Endothelial cell of umbilical vein (primary cell): ENCODE measurements at regions of chr1 and their contacts with region 1.

Region 1: GRCh38 chr1:159132271-159132881 is 39.0 kb upstream of the CADM3 start:
- DNase-seq: peak; percentile 68
- H3K4me3 ChIP-seq: no peak overlapping the region
- H3K27ac ChIP-seq: no peak overlapping the region
- H3K4me1 ChIP-seq: no peaks in the 10 kb centered on the region
- H3K27me3 ChIP-seq: peaks cover 15 to 16% of the 10 kb centered on the region in 2 experiments
- CTCF ChIP-seq: peak; percentile 76 to 89
- POLR2A ChIP-seq: no peak

Region 2: GRCh38 chr1:159152031-159152430 is 19.7 kb after region 1 on chr1:
- CTCF ChIA-PET with region 1: interaction called, 12 read pairs
- POLR2A ChIA-PET with region 1: no interaction called
- dilution Hi-C with region 1: no loop called
- intact Hi-C with region 1: no loop called
- DNase-seq: no peak
- H3K4me3 ChIP-seq: no peak overlapping the region
- H3K27ac ChIP-seq: no peak overlapping the region
- H3K4me1 ChIP-seq: no peaks in the 10 kb centered on the region
- H3K27me3 ChIP-seq: peaks cover 1 to 3% of the 10 kb centered on the region in 2 experiments
- CTCF ChIP-seq: no peak
- POLR2A ChIP-seq: no peak

Region 3: GRCh38 chr1:159188375-159188788 is 56.0 kb after region 1 on chr1:
- CTCF ChIA-PET with region 1: interaction called, 12 read pairs
- POLR2A ChIA-PET with region 1: no interaction called
- dilution Hi-C with region 1: no loop called
- intact Hi-C with region 1: no loop called
- DNase-seq: peak; percentile 80
- H3K4me3 ChIP-seq: peak overlapping the region in 1 of 3 experiments; percentile 5
- H3K27ac ChIP-seq: no peak overlapping the region
- H3K4me1 ChIP-seq: no peaks in the 10 kb centered on the region
- H3K27me3 ChIP-seq: peaks cover 31 to 39% of the 10 kb centered on the region in 2 experiments
- CTCF ChIP-seq: no peak
- POLR2A ChIP-seq: no peak

Region 4: DNA sequence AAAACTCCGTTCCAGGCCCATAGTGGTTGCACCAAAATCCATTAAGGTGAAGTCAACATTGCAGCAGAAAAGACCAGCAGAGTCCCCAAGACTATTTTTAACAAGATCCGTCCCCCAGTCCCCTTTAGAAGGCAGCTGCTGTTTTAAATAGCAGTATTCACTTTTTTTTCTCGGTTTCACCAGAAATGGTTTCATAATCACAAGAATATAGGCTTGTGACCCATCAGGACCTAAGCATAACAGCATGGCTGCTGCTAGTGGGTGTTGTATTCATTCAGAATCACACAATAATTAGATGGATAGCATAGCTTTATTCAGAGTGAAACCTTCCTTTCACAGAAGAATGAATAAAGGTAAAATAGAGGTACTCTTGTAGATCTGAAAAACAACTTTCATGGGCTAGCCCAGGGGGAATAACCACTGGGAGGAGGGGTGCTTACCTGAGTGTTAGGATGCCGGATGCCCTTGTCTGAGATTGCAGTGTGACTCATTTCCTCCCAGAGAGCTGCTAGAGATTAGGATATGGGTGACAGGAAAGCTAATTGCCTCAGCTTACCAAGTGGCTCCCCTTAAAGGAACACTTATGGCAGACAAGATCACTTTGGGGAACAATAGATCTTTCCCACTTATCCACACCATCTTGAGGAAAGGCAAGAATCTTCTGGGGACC is 107.3 kb after region 1 on chr1:
- CTCF ChIA-PET with region 1: no interaction called
- POLR2A ChIA-PET with region 1: no interaction called
- dilution Hi-C with region 1: no loop called
- intact Hi-C with region 1: no loop called
- DNase-seq: peak; percentile 18
- H3K4me3 ChIP-seq: no peak overlapping the region
- H3K27ac ChIP-seq: no peak overlapping the region
- H3K4me1 ChIP-seq: peaks cover 8% of the 10 kb centered on the region
- H3K27me3 ChIP-seq: no peaks in the 10 kb centered on the region
- CTCF ChIP-seq: no peak
- POLR2A ChIP-seq: no peak

Region 5: GRCh38 chr1:159790237-159790917 is 658.0 kb after region 1 on chr1:
- CTCF ChIA-PET with region 1: interaction called, 15 read pairs
- POLR2A ChIA-PET with region 1: no interaction called
- dilution Hi-C with region 1: no loop called
- intact Hi-C with region 1: loop called (anchors 2 kb)
- DNase-seq: peak; percentile 57
- H3K4me3 ChIP-seq: no peak overlapping the region
- H3K27ac ChIP-seq: no peak overlapping the region
- H3K4me1 ChIP-seq: peaks cover 16% of the 10 kb centered on the region
- H3K27me3 ChIP-seq: no peaks in the 10 kb centered on the region
- CTCF ChIP-seq: peak; percentile 61 to 65
- POLR2A ChIP-seq: no peak

Region 6: GRCh38 chr1:160078512-160079195 is 946.3 kb after region 1 on chr1:
- CTCF ChIA-PET with region 1: interaction called, 27 read pairs
- POLR2A ChIA-PET with region 1: no interaction called
- dilution Hi-C with region 1: no loop called
- intact Hi-C with region 1: no loop called
- DNase-seq: peak; percentile 26
- H3K4me3 ChIP-seq: no peak overlapping the region
- H3K27ac ChIP-seq: no peak overlapping the region
- H3K4me1 ChIP-seq: no peaks in the 10 kb centered on the region
- H3K27me3 ChIP-seq: peaks cover 44 to 56% of the 10 kb centered on the region in 2 experiments
- CTCF ChIP-seq: peak; percentile 80 to 87
- POLR2A ChIP-seq: no peak